ENCODE measurements at regions of chr9 and their contacts with region 1.

Region 1: DNA sequence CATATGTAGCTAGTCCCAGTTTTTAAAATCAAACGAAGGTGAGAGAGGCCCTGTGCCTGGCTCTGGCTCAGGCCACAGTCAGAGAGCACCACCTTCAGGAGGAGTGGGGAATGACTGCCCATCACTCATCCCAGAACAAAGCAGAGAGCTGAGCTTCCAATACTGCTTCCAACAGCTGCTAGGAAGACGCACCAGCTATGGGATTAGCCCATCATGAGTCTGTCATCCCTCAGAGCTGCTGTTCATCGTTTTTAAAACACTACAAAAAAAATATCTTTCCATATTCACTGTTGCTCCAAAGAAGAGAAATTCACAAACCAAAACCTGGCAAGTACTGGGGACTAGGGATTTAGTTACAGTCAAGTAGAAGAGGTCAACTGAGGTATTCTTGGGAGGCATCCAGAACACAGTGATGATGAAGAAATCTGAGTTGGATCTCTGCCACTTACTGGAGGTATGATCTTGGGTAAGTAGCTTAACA is 102.4 kb downstream of the CDK5RAP2 start:
- H3K4me3 Mint-ChIP-seq: no peak overlapping the region
- H3K27ac Mint-ChIP-seq: no peak overlapping the region
- H3K4me1 Mint-ChIP-seq: peaks cover 31% of the 10 kb centered on the region
- H3K27me3 Mint-ChIP-seq: no peaks in the 10 kb centered on the region

Region 2: GRCh38 chr9:119961774-119962424 is 515.7 kb before region 1 on chr9:
- intact Hi-C with region 1: loop called (anchors 1 kb)
- H3K4me3 Mint-ChIP-seq: no peak overlapping the region
- H3K27ac Mint-ChIP-seq: no peak overlapping the region
- H3K4me1 Mint-ChIP-seq: peaks cover 9% of the 10 kb centered on the region
- H3K27me3 Mint-ChIP-seq: peaks cover 12% of the 10 kb centered on the region

Region 3: GRCh38 chr9:120344230-120344629 is 133.3 kb before region 1 on chr9:
- intact Hi-C with region 1: no loop called
- H3K4me3 Mint-ChIP-seq: no peak overlapping the region
- H3K27ac Mint-ChIP-seq: no peak overlapping the region
- H3K4me1 Mint-ChIP-seq: no peaks in the 10 kb centered on the region
- H3K27me3 Mint-ChIP-seq: peaks cover 7% of the 10 kb centered on the region

Region 4: GRCh38 chr9:120434532-120434931 is 43.0 kb before region 1 on chr9:
- intact Hi-C with region 1: loop called (anchors 5 kb)
- H3K4me3 Mint-ChIP-seq: peak overlapping the region; percentile 6
- H3K27ac Mint-ChIP-seq: peak overlapping the region; percentile 76
- H3K4me1 Mint-ChIP-seq: peaks cover 61% of the 10 kb centered on the region
- H3K27me3 Mint-ChIP-seq: no peaks in the 10 kb centered on the region

Region 5: GRCh38 chr9:120592210-120592609 is 114.6 kb after region 1 on chr9:
- intact Hi-C with region 1: no loop called
- H3K4me3 Mint-ChIP-seq: no peak overlapping the region
- H3K27ac Mint-ChIP-seq: no peak overlapping the region
- H3K4me1 Mint-ChIP-seq: no peaks in the 10 kb centered on the region
- H3K27me3 Mint-ChIP-seq: no peaks in the 10 kb centered on the region